Transverse colon (tissue), 4 donors: ENCODE measurements at regions of chr6 and their contacts with region 1.

Region 1: DNA sequence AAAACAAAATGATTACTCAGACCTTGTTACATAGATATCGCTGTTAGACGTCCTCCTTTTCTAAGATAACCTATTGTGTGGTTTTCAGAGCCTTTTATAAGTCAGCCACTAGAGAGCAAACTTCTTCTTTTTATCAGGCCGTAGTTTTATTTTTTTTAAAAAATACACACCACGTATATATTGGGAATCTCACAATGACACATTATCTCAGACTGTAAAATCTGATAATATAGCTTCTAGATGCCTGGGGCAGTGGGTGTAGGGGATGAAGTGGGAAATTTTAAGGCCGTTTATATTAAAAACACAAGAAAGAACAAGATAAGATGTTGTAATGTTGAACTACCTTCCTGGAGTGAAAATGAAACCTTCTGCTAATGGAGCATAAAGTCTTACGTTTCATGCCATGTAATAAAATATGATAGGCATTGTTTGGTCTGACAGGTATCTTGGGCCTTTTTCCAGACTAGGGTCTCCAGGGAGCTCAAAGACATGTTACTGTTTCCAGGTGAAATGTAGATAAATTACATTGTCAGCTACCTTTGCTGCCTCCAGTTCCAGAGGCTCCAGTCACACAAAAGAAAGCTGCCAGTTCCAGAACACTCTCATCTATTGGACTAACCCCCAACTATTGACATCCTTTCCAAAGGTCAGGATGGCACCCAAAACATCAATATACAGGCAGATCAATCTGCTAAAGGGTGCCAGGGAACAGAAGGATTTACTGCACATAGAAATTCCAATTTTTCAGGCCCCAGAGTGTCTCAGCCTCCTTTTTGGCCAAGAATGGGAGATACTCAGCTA is 130.2 kb upstream of the AKIRIN2 start:
- DNase-seq: no peak
- H3K4me3 ChIP-seq: peak overlapping the region in 3 of 4 donors; percentile 32 to 46 (median 42)
- H3K27ac ChIP-seq: peak overlapping the region; percentile 16 to 74 (median 42)
- H3K4me1 ChIP-seq: peaks cover 0 to 23% (median 4%) of the 10 kb centered on the region in 4 donors
- H3K27me3 ChIP-seq: no peaks in the 10 kb centered on the region
- CTCF ChIP-seq: peak; percentile 41 to 47 (median 44)
- EP300 ChIP-seq: no peak
- POLR2A ChIP-seq: no peak

Region 2: GRCh38 chr6:87099472-87099871 is 732.8 kb before region 1 on chr6:
- in situ Hi-C with region 1: no loop called
- intact Hi-C with region 1: no loop called
- DNase-seq: no peak
- H3K4me3 ChIP-seq: no peak overlapping the region
- H3K27ac ChIP-seq: no peak overlapping the region
- H3K4me1 ChIP-seq: no peaks in the 10 kb centered on the region
- H3K27me3 ChIP-seq: peaks cover 5% of the 10 kb centered on the region
- CTCF ChIP-seq: no peak
- EP300 ChIP-seq: no peak
- POLR2A ChIP-seq: no peak

Region 3: DNA sequence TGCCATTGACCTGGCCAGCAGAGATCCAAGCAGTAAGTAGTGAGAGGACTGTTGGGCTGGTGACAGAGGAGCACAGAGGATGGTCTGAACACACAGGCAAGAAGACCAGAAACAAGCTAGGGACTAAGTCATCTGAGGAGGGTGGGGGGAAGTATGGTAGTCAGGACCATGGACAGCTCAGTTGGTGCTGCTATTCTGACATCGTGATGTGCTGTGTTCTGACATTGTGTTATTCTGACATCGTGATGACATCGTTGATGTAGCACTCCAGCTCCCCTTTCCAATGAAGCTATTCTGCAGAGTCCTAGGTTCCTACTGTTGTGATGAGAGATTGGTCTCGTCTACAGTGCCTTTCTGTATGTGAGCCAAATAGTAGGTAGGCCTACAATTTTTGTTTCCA is 395.8 kb before region 1 on chr6:
- in situ Hi-C with region 1: no loop called
- intact Hi-C with region 1: no loop called
- DNase-seq: peak; percentile 38
- H3K4me3 ChIP-seq: no peak overlapping the region
- H3K27ac ChIP-seq: no peak overlapping the region
- H3K4me1 ChIP-seq: no peaks in the 10 kb centered on the region
- H3K27me3 ChIP-seq: no peaks in the 10 kb centered on the region
- CTCF ChIP-seq: no peak
- EP300 ChIP-seq: no peak
- POLR2A ChIP-seq: no peak

Region 4: GRCh38 chr6:88492824-88493223 is 660.6 kb after region 1 on chr6:
- in situ Hi-C with region 1: no loop called
- intact Hi-C with region 1: loop called (anchors 10 kb)
- DNase-seq: no peak
- H3K4me3 ChIP-seq: no peak overlapping the region
- H3K27ac ChIP-seq: no peak overlapping the region
- H3K4me1 ChIP-seq: no peaks in the 10 kb centered on the region
- H3K27me3 ChIP-seq: no peaks in the 10 kb centered on the region
- CTCF ChIP-seq: peak in 1 of 5 experiments; percentile 15
- EP300 ChIP-seq: no peak
- POLR2A ChIP-seq: no peak

Region 5: GRCh38 chr6:88780714-88781389 is 948.6 kb after region 1 on chr6:
- in situ Hi-C with region 1: loop called in 1 of 4 experiments (anchors 25 kb)
- intact Hi-C with region 1: no loop called
- DNase-seq: peak; percentile 37
- H3K4me3 ChIP-seq: no peak overlapping the region
- H3K27ac ChIP-seq: no peak overlapping the region
- H3K4me1 ChIP-seq: no peaks in the 10 kb centered on the region
- H3K27me3 ChIP-seq: no peaks in the 10 kb centered on the region
- CTCF ChIP-seq: peak; percentile 57 to 85 (median 81)
- EP300 ChIP-seq: no peak
- POLR2A ChIP-seq: no peak